AG04449 (cell line): ENCODE measurements at regions of chr6 and their contacts with region 1.

Region 1: GRCh38 chr6:129598244-129599187 is 111.5 kb downstream of the ARHGAP18 start:
- DNase-seq: peak; percentile 16
- H3K4me3 ChIP-seq: no peak overlapping the region
- CTCF ChIP-seq: peak; percentile 50

Region 2: GRCh38 chr6:129498950-129499842 is 99.3 kb before region 1 on chr6:
- CTCF ChIA-PET with region 1: interaction called, 43 read pairs
- POLR2A ChIA-PET with region 1: no interaction called
- DNase-seq: no peak
- H3K4me3 ChIP-seq: no peak overlapping the region
- CTCF ChIP-seq: peak; percentile 22

Region 3: DNA sequence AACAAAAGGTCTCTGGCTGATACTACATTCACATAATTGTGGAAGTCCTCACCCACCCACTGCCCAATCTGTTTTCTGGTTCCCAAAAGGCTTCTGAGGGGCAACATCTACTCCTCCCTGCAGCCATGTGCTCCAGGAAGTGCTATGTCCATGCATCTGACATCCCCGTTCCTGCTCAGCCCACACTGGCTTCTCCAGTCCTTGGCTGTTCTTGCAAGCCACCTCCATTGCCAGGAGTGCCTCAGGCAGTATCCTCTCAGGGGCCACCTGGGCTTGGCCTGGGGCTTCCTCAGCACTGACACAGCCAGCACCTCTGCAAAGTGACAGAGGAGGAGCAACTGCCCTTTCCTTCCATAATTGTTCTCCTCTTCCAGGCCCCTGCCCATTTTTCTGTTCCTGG is 93.2 kb after region 1 on chr6:
- CTCF ChIA-PET with region 1: no interaction called
- POLR2A ChIA-PET with region 1: no interaction called
- DNase-seq: no peak
- H3K4me3 ChIP-seq: no peak overlapping the region
- CTCF ChIP-seq: no peak

Region 4: GRCh38 chr6:129709769-129710449 is 111.4 kb after region 1 on chr6 and contains the start of gene ARHGAP18:
- CTCF ChIA-PET with region 1: interaction called, 12 read pairs
- POLR2A ChIA-PET with region 1: no interaction called
- DNase-seq: peak; percentile 58
- H3K4me3 ChIP-seq: peak within 1 kb of the TSS; percentile 86
- CTCF ChIP-seq: no peak

Region 5: GRCh38 chr6:129744201-129744879 is 145.8 kb after region 1 on chr6:
- CTCF ChIA-PET with region 1: interaction called, 11 read pairs
- POLR2A ChIA-PET with region 1: no interaction called
- DNase-seq: peak; percentile 31
- H3K4me3 ChIP-seq: no peak overlapping the region
- CTCF ChIP-seq: no peak

Region 6: GRCh38 chr6:129766959-129767728 is 168.6 kb after region 1 on chr6:
- CTCF ChIA-PET with region 1: interaction called, 14 read pairs
- POLR2A ChIA-PET with region 1: no interaction called
- DNase-seq: no peak
- H3K4me3 ChIP-seq: peak overlapping the region; percentile 59
- CTCF ChIP-seq: no peak

Region 7: DNA sequence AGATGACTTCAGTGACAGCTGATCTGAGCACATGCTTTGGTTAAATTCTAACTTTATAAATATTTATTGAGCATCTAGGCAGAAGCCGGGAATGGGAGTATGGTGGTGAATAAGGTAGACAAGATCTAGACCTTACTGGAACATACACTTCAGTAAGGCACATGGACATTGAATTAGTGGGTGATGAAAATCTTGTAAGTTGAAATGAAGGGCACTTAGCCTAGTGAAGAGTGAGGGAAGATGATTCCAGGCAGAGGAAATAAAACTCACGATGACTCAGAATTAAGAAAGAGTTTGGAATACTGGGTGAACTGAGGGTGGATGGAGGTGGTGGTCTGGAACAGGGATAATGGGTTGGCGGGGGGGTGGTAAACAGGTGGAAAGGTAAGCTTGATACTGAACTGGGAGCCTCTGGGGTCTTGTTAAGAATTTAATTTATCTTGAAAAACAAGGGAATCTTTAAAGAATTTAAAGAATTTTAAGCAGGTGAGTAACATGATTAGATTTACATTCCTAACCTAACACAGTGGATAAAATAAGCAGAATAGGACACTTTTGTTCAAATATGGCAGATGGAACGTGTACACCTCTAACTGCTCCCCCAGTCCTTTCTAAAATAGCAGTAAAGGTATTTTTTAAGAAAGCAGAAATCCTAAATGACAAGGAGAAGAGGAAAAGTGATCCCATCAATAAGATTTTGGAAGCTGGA is 186.7 kb after region 1 on chr6:
- CTCF ChIA-PET with region 1: interaction called, 13 read pairs
- POLR2A ChIA-PET with region 1: no interaction called
- DNase-seq: no peak
- H3K4me3 ChIP-seq: no peak overlapping the region
- CTCF ChIP-seq: no peak

Region 8: GRCh38 chr6:130020907-130021629 is 422.6 kb after region 1 on chr6:
- CTCF ChIA-PET with region 1: interaction called, 20 read pairs
- POLR2A ChIA-PET with region 1: no interaction called
- DNase-seq: peak; percentile 75
- H3K4me3 ChIP-seq: peak overlapping the region; percentile 73
- CTCF ChIP-seq: peak; percentile 82